ENCODE measurements at regions of chr6 and their contacts with region 1.

Region 1: GRCh38 chr6:14210663-14211561 is 93.3 kb downstream of the CD83 start:
- DNase-seq: peak; percentile 76 to 95
- H3K4me3 ChIP-seq: peak overlapping the region; percentile 70 to 81
- H3K27ac ChIP-seq: peak overlapping the region; percentile 49
- H3K4me1 ChIP-seq: peaks cover 6 to 11% of the 10 kb centered on the region in 2 donors
- H3K27me3 ChIP-seq: no peaks in the 10 kb centered on the region
- CTCF ChIP-seq: peak in 2 of 3 experiments; percentile 39 to 98

Region 2: DNA sequence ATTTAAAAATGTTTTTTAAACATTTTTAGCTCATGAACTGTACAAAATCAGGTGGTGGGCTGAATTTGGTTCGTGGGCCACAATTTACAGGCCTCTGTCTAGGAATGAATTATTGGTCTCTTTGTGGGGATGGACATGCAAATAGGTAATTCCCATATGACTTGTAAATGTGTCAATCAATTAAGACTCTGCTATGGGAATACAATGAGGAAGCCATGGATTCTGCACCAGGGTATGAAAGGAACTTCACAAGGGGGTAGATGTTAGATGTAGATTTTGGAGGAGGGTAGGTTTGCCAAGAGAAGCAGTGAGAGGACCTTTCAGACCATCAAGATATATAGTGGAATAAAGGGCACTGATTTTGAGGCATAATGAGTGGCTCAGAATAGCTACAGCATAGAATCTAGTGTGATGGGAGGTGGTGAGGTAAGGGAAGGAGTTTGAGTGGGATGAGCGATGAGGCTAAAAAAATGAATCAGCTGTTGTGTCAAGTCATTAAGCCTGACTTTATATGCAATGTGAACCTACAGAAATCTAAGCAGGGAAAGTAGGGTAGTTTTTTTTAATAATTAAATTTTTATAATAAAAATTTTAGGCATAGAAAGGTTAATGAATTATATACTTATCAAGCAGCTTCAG is 318.8 kb before region 1 on chr6:
- intact Hi-C with region 1: no loop called
- DNase-seq: no peak
- H3K4me3 ChIP-seq: no peak overlapping the region
- H3K27ac ChIP-seq: no peak overlapping the region
- H3K4me1 ChIP-seq: no peaks in the 10 kb centered on the region
- H3K27me3 ChIP-seq: no peaks in the 10 kb centered on the region
- CTCF ChIP-seq: no peak

Region 3: GRCh38 chr6:14518515-14519217 is 307.8 kb after region 1 on chr6:
- intact Hi-C with region 1: loop called (anchors 10 kb)
- DNase-seq: no peak
- H3K4me3 ChIP-seq: no peak overlapping the region
- H3K27ac ChIP-seq: no peak overlapping the region
- H3K4me1 ChIP-seq: peaks cover 0 to 5% of the 10 kb centered on the region in 2 donors
- H3K27me3 ChIP-seq: no peaks in the 10 kb centered on the region
- CTCF ChIP-seq: no peak

Region 4: DNA sequence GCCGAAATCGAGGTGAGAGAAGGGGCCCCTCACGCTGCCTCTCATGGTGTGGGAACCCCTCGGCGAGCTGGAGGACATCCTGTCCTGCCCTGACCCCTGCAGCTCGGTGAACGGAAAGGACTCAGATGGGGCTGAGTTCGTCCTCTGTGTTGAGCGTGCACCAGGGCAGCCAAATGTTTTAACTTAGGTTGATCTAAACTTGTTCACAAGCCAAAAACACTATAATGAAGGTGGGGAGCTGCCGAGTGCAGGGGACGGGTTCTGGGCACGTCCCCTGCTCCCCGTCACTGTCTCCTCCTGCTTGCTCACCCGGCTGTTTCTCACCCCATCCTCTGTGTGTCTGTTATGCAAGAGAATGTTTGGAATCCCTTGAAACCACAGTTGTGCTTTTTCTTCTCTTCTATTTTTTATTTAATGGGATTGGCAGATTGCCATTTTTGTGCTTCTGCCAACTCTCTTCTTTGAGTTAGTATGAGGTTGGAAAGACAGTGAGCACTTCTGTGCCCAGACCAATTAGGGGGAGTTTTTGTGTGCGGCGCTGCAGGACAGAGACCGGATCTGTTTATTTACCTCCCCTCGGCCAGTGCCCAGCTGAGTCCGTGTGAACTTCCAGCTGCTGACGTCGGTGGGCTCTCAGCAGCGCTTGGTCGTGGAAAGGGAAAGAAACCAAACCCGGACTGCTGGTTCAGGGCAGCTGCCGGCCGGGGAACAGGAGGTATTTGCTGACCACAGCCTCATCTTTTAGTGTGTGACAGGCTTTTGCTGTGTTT is 1293.9 kb after region 1 on chr6:
- intact Hi-C with region 1: loop called (anchors 5 kb)
- DNase-seq: no peak
- H3K4me3 ChIP-seq: peak overlapping the region; percentile 22 to 53
- H3K27ac ChIP-seq: peak overlapping the region; percentile 19 to 33
- H3K4me1 ChIP-seq: peaks cover 0 to 18% of the 10 kb centered on the region in 2 donors
- H3K27me3 ChIP-seq: no peaks in the 10 kb centered on the region
- CTCF ChIP-seq: no peak

Measured in ascending aorta (tissue), 2 donors.